Activated CD8-positive, alpha-beta T cell treated with anti-CD3 and anti-CD28 coated beads for 36 hours (primary cell): ENCODE measurements at regions of chr2 and their contacts with region 1.

Region 1: GRCh38 chr2:11129598-11130449 is 25.4 kb upstream of the SLC66A3 start:
- DNase-seq: peak; percentile 77
- ATAC-seq: peak; percentile 86
- H3K4me3 Mint-ChIP-seq: peak overlapping the region; percentile 65
- H3K27ac Mint-ChIP-seq: peak overlapping the region; percentile 23
- H3K4me1 Mint-ChIP-seq: peaks cover 18% of the 10 kb centered on the region
- H3K27me3 Mint-ChIP-seq: no peaks in the 10 kb centered on the region
- CTCF ChIP-seq: peak; percentile 41

Region 2: DNA sequence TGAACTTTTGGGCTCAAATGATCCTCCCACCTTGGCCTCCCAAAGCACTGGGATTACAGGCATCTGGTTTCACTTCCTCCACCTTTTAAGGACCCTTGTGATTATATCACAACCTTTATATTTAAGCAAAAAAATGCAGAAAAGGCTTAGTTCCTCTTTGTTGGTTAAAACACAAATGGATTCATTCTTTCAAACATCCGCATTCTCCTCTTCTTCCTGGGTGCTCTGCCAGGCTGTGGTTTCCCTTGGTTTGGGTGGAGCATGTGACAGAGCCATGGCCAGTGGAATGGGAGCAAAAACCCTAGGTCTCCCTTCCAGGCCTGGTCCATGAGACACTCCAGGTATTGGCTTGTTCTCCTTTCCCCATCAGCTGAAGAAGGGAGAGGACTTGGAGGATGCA is 15.5 kb after region 1 on chr2:
- CTCF ChIA-PET with region 1: interaction called, 52 read pairs
- POLR2A ChIA-PET with region 1: interaction called, 8 read pairs
- intact Hi-C with region 1: no loop called
- DNase-seq: no peak
- ATAC-seq: no peak
- H3K4me3 Mint-ChIP-seq: no peak overlapping the region
- H3K27ac Mint-ChIP-seq: no peak overlapping the region
- H3K4me1 Mint-ChIP-seq: no peaks in the 10 kb centered on the region
- H3K27me3 Mint-ChIP-seq: no peaks in the 10 kb centered on the region
- CTCF ChIP-seq: no peak

Region 3: DNA sequence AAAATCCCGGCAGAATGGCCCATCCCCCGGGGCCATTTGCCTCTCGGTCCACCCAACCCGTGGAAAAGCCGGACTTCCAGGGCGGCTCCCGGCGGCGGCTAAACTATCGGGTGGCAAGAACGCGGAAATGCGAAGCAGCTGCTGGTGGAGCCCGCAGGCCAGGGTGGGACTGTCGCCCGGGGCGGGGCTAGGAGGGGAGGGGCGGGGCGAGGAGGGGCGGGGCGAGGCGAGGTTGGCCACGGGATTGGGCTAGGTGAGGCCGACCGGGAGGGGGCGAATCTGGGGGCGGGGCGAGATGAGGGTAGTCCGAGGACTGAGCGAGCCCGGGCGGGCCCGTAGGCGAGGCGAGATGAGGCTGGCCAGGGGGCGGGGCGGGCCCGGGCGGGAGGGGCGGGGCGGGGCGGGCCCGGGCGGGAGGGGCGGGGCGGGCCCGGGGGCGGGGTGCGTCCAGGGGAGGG is 25.1 kb after region 1 on chr2:
- CTCF ChIA-PET with region 1: interaction called, 52 read pairs
- POLR2A ChIA-PET with region 1: interaction called, 3 read pairs
- intact Hi-C with region 1: no loop called
- DNase-seq: peak; percentile 99
- ATAC-seq: peak; percentile 95
- H3K4me3 Mint-ChIP-seq: peak overlapping the region; percentile 77
- H3K27ac Mint-ChIP-seq: peak overlapping the region; percentile 86
- H3K4me1 Mint-ChIP-seq: peaks cover 12% of the 10 kb centered on the region
- H3K27me3 Mint-ChIP-seq: no peaks in the 10 kb centered on the region
- CTCF ChIP-seq: no peak

Region 4: GRCh38 chr2:11160731-11161455 is 31.1 kb after region 1 on chr2:
- CTCF ChIA-PET with region 1: interaction called, 52 read pairs
- POLR2A ChIA-PET with region 1: interaction called, 3 read pairs
- intact Hi-C with region 1: no loop called
- DNase-seq: no peak
- ATAC-seq: peak; percentile 83
- H3K4me3 Mint-ChIP-seq: peak overlapping the region; percentile 31
- H3K27ac Mint-ChIP-seq: peak overlapping the region; percentile 86
- H3K4me1 Mint-ChIP-seq: peaks cover 20% of the 10 kb centered on the region
- H3K27me3 Mint-ChIP-seq: no peaks in the 10 kb centered on the region
- CTCF ChIP-seq: no peak

Region 5: GRCh38 chr2:11411768-11412448 is 282.1 kb after region 1 on chr2:
- CTCF ChIA-PET with region 1: interaction called, 8 read pairs
- POLR2A ChIA-PET with region 1: no interaction called
- intact Hi-C with region 1: loop called (anchors 5 kb)
- DNase-seq: peak; percentile 8
- ATAC-seq: no peak
- H3K4me3 Mint-ChIP-seq: no peak overlapping the region
- H3K27ac Mint-ChIP-seq: no peak overlapping the region
- H3K4me1 Mint-ChIP-seq: no peaks in the 10 kb centered on the region
- H3K27me3 Mint-ChIP-seq: peaks cover 17% of the 10 kb centered on the region
- CTCF ChIP-seq: peak; percentile 40

Region 6: DNA sequence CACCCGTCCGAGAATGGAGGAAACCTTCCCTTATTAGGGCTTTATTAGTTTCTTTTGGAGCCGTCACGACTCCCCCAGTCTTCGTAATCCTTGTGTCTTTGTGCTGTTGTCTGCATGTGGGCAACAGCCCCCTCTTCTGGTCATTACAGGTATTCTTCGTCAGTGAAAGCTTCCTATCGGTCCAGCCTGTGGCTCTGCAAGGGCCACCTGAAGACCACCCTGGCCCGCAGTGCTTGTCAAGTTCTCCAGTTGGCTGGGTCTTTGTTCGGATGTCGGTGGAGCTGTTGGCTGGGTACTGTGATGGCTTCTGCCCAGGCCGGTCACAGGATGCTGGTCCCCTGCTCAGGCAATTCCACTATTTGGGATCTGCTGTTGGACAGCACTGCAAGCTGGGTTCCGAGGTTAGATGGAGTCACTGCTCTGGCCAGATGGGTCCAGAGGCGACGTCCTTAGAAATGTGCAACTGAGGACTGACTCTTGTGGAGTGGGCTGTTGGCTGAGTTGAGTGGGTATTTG is 317.0 kb after region 1 on chr2:
- CTCF ChIA-PET with region 1: interaction called, 33 read pairs
- POLR2A ChIA-PET with region 1: no interaction called
- intact Hi-C with region 1: loop called (anchors 10 kb)
- DNase-seq: peak; percentile 63
- ATAC-seq: peak; percentile 66
- H3K4me3 Mint-ChIP-seq: no peak overlapping the region
- H3K27ac Mint-ChIP-seq: no peak overlapping the region
- H3K4me1 Mint-ChIP-seq: no peaks in the 10 kb centered on the region
- H3K27me3 Mint-ChIP-seq: no peaks in the 10 kb centered on the region
- CTCF ChIP-seq: peak; percentile 72

Region 7: GRCh38 chr2:11465497-11466406 is 335.9 kb after region 1 on chr2 and contains the start of gene E2F6:
- CTCF ChIA-PET with region 1: interaction called, 13 read pairs
- POLR2A ChIA-PET with region 1: no interaction called
- intact Hi-C with region 1: no loop called
- DNase-seq: peak; percentile 88
- ATAC-seq: peak; percentile 82
- H3K4me3 Mint-ChIP-seq: peak within 1 kb of the TSS; percentile 86
- H3K27ac Mint-ChIP-seq: peak within 1 kb of the TSS; percentile 86
- H3K4me1 Mint-ChIP-seq: peaks cover 47% of the 10 kb centered on the region
- H3K27me3 Mint-ChIP-seq: no peaks in the 10 kb centered on the region
- CTCF ChIP-seq: no peak
- total RNA-seq, gene E2F6: 9.8 to 10.5 TPM